ENCODE measurements at regions of chr2 and their contacts with region 1.

Region 1: GRCh38 chr2:120174963-120175581 is 48.1 kb downstream of the TMEM185B start:
- DNase-seq: no peak
- H3K4me3 Mint-ChIP-seq: no peak overlapping the region
- H3K27ac Mint-ChIP-seq: peak overlapping the region; percentile 28
- H3K4me1 Mint-ChIP-seq: peaks cover 48% of the 10 kb centered on the region
- H3K27me3 Mint-ChIP-seq: no peaks in the 10 kb centered on the region

Region 2: DNA sequence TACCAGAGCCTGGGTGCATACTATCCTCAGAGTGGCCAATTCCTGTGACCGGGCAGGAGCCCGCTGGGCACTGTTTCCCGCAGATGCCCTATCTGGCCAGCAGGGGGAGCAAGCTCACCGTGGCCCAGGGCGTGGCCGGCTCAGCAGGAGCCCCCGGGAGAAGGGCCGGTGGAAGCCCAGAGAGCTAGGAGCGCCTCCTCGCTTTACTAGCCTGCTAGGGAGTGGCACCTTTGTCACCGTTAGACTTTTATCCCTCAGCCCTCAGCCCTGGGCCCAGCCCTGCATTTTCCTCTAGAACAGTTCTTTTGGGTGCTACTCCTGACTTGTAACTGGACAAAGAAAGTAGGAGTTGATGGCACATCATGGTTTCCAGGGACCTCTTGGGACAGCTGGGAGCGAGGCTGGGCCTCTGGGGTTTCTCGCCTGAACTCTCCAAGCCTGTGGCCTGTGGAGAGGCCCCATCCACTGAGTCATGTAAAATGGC is 472.1 kb before region 1 on chr2:
- CTCF ChIA-PET with region 1: interaction called, 46 read pairs
- POLR2A ChIA-PET with region 1: interaction called, 5 read pairs
- DNase-seq: peak; percentile 74
- H3K4me3 Mint-ChIP-seq: no peak overlapping the region
- H3K27ac Mint-ChIP-seq: no peak overlapping the region
- H3K4me1 Mint-ChIP-seq: peaks cover 24% of the 10 kb centered on the region
- H3K27me3 Mint-ChIP-seq: peaks cover 9% of the 10 kb centered on the region

Region 3: DNA sequence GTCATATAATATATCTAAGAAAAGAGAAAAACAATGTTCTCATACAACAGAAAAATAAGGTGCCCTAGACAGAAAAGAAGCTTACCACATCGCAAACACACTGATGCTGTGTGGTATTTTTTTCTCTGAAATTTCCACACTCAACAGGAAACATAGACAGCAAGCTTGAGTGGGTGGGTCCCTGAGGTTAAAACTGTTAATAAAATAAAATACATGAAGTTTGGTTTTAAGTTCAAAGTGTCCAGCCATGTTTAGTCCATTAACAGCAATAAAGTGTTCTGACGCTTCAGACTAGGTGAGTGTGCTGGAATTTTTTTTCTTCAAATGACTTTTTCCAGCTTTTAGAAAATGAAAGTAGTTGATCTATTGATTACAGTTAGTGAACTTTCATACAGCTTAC is 245.5 kb before region 1 on chr2:
- CTCF ChIA-PET with region 1: interaction called, 3 read pairs
- POLR2A ChIA-PET with region 1: interaction called, 22 read pairs
- DNase-seq: peak; percentile 46
- H3K4me3 Mint-ChIP-seq: peak overlapping the region; percentile 81
- H3K27ac Mint-ChIP-seq: peak overlapping the region; percentile 92
- H3K4me1 Mint-ChIP-seq: peaks cover 49% of the 10 kb centered on the region
- H3K27me3 Mint-ChIP-seq: no peaks in the 10 kb centered on the region

Region 4: DNA sequence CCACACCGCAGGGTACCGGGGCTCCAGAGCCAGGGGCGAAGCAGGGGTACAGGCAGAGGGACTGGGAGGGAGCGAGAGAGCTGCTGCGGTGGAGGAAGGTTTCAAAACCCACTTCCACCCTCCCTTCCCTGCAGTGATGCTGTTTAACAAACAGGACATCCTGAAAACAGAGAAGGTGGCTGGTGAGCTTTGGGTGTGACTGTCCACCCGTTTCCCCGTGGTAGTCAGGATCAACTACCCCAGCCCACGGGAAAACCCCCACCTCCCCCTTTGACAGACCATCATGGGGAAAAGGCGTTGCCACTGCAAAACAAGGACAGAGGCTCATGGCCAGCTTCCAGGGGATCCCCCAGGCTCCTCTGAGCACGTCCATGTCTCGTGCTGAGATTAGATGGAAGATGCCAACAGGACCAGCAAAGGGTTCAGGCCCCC is 35.2 kb after region 1 on chr2:
- CTCF ChIA-PET with region 1: interaction called, 10 read pairs
- POLR2A ChIA-PET with region 1: interaction called, 6 read pairs
- DNase-seq: peak; percentile 41
- H3K4me3 Mint-ChIP-seq: no peak overlapping the region
- H3K27ac Mint-ChIP-seq: peak overlapping the region; percentile 85
- H3K4me1 Mint-ChIP-seq: peaks cover 17% of the 10 kb centered on the region
- H3K27me3 Mint-ChIP-seq: no peaks in the 10 kb centered on the region

Region 5: GRCh38 chr2:120252225-120253021 is 77.4 kb after region 1 on chr2 and contains the start of gene RALB:
- CTCF ChIA-PET with region 1: interaction called, 14 read pairs
- POLR2A ChIA-PET with region 1: interaction called, 9 read pairs
- DNase-seq: peak; percentile 99
- H3K4me3 Mint-ChIP-seq: peak within 1 kb of the TSS; percentile 99
- H3K27ac Mint-ChIP-seq: peak within 1 kb of the TSS; percentile 85
- H3K4me1 Mint-ChIP-seq: peaks cover 64% of the 10 kb centered on the region
- H3K27me3 Mint-ChIP-seq: peaks cover 10% of the 10 kb centered on the region
- total RNA-seq, gene RALB: 59.2 to 59.3 TPM

Region 6: DNA sequence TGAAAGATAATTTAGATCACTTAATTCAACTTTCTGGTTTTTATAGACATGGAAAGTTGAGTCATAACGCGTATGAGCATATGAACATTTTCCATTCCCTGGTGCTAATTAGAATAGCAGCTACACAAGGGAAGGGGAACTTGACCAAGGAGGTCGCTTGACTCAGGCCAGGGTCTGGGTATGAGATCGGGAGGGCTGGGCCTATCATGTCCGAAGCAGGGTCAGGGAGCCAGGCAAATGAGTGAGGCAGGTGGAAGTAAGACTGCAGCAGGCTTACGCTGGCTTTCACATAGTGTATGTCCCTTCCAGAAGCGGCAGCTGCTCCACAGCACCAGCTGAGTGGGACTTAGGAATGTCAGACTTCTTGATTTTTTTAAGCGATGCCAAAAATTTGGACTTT is 92.3 kb after region 1 on chr2:
- CTCF ChIA-PET with region 1: no interaction called
- POLR2A ChIA-PET with region 1: no interaction called
- DNase-seq: no peak
- H3K4me3 Mint-ChIP-seq: no peak overlapping the region
- H3K27ac Mint-ChIP-seq: no peak overlapping the region
- H3K4me1 Mint-ChIP-seq: peaks cover 26% of the 10 kb centered on the region
- H3K27me3 Mint-ChIP-seq: no peaks in the 10 kb centered on the region

Region 7: DNA sequence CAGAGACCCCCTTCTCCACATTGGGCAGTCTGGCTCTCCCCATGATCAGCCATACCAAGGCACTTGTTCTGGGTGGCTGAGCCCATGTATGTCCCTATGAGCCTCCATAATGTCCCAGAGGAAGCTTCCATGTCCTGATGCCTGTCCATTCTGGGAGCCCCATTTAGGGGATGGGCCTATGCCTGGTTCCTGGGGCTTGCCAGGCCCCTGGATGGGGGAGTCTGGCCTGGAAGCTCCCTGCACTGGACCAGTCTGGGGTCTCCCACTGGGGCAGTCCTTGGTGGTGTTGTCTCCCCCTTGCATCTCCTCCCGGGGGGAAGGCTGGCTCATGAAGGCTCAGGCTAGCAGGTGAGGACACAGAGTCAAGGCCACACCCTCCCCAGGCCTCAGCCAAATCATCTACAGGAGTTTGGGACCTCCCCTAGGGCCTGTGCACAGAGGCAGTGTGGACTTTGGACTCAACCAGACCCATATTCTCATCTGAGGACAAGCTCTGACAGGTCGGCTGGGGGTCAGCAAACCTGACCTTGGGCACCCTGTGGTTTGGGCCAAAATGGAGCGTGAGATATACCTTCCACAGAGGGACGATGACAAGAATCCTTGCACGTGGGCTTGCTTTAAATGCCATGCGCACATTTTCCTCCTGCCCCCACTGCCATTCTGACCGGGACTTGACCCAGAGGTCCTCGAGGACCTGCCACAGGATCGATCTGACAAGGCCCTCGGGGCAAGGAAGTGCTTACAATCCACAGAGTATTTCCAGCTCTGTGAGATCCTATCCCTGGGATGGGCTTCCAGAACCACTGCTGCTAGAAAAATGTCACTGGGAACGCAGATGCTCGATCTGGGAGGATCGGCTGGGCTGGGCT is 209.6 kb after region 1 on chr2:
- CTCF ChIA-PET with region 1: no interaction called
- POLR2A ChIA-PET with region 1: no interaction called
- DNase-seq: no peak
- H3K4me3 Mint-ChIP-seq: no peak overlapping the region
- H3K27ac Mint-ChIP-seq: no peak overlapping the region
- H3K4me1 Mint-ChIP-seq: no peaks in the 10 kb centered on the region
- H3K27me3 Mint-ChIP-seq: no peaks in the 10 kb centered on the region

Measured in activated CD4-positive, alpha-beta memory T cell treated with anti-CD3 and anti-CD28 coated beads, Interleukin-2, amount 10 ng/mL, durations not matched to agents 7 days and 5 days (primary cell).